H1 (cell line): ENCODE measurements at regions of chr11 and their contacts with region 1.

Region 1: GRCh38 chr11:102007567-102008437 is 39.4 kb upstream of the CFAP300 start:
- DNase-seq: no peak
- H3K4me3 ChIP-seq: no peak overlapping the region
- H3K27ac ChIP-seq: no peak overlapping the region
- H3K4me1 ChIP-seq: peaks cover 0 to 3% (median 0%) of the 10 kb centered on the region in 4 experiments; a peak in 1 of 7 replicates
- H3K27me3 ChIP-seq: no peaks in the 10 kb centered on the region
- CTCF ChIP-seq: peak in 2 of 3 experiments; percentile 23 to 29; a peak in 2 of 4 replicates
- EP300 ChIP-seq: no peak
- POLR2A ChIP-seq: no peak
- RAD21 ChIP-seq: peak in 1 of 2 experiments; percentile 56

Region 2: GRCh38 chr11:101880222-101880621 is 127.6 kb before region 1 on chr11:
- CTCF ChIA-PET with region 1: interaction called, 22 read pairs
- POLR2A ChIA-PET with region 1: no interaction called
- DNase-seq: no peak
- H3K4me3 ChIP-seq: no peak overlapping the region
- H3K27ac ChIP-seq: no peak overlapping the region
- H3K4me1 ChIP-seq: no peaks in the 10 kb centered on the region
- H3K27me3 ChIP-seq: no peaks in the 10 kb centered on the region
- CTCF ChIP-seq: peak in 2 of 3 experiments; percentile 29 to 42; a peak in 2 of 4 replicates
- EP300 ChIP-seq: no peak
- POLR2A ChIP-seq: no peak
- RAD21 ChIP-seq: peak; percentile 29 to 31; a peak in 3 of 4 replicates

Region 3: GRCh38 chr11:101996111-101996510 is 11.7 kb before region 1 on chr11:
- CTCF ChIA-PET with region 1: interaction called, 24 read pairs
- POLR2A ChIA-PET with region 1: no interaction called
- DNase-seq: no peak
- H3K4me3 ChIP-seq: no peak overlapping the region
- H3K27ac ChIP-seq: no peak overlapping the region
- H3K4me1 ChIP-seq: no peaks in the 10 kb centered on the region
- H3K27me3 ChIP-seq: no peaks in the 10 kb centered on the region
- CTCF ChIP-seq: no peak
- EP300 ChIP-seq: no peak
- POLR2A ChIP-seq: no peak
- RAD21 ChIP-seq: no peak

Region 4: DNA sequence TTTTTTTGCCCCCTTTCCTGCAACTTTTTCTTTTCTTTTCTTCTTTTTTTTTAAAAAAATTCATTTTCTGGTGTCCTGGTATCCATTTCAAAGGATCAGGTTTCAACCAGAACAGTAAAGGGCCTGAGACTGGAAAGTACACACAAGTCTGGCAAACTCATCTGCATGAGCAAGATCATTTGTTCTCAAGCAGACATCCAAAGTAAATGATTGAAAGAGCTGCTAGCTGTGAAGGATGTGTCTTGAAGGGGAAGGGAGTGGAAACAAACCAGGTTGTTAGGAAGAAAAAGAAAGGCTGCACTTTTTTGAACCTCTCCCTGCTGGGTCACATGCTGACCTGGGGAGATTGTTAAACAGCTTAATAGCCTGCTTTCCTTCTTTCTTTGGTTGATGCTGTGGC is 107.8 kb after region 1 on chr11:
- CTCF ChIA-PET with region 1: no interaction called
- POLR2A ChIA-PET with region 1: no interaction called
- DNase-seq: peak in 1 of 2 experiments; percentile 41
- H3K4me3 ChIP-seq: peak overlapping the region in 1 of 4 experiments; percentile 29; a peak in 2 of 8 replicates
- H3K27ac ChIP-seq: no peak overlapping the region
- H3K4me1 ChIP-seq: peaks cover 0 to 44% (median 5%) of the 10 kb centered on the region in 4 experiments; a peak in 5 of 7 replicates
- H3K27me3 ChIP-seq: no peaks in the 10 kb centered on the region
- CTCF ChIP-seq: no peak
- EP300 ChIP-seq: no peak
- POLR2A ChIP-seq: no peak
- RAD21 ChIP-seq: no peak

Region 5: DNA sequence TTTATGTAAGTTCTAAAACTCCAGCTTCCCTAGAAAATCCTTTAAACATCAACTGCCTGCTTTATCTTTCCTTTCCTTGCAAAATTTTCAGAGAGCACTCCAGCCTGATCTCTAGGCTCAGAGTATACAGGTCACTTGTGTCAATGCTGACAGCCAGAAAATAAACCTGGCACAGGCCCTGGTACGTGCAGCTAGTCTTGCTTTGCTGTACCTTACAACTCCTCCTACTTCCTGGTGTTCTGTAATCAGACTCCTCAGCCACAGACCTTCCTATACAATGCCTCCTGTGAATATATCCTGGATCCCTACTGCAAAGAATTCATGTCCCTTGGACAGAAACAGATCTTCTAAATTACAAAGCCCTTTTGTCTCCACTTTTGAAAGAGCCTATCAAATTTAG is 469.0 kb after region 1 on chr11:
- CTCF ChIA-PET with region 1: no interaction called
- POLR2A ChIA-PET with region 1: no interaction called
- DNase-seq: no peak
- H3K4me3 ChIP-seq: no peak overlapping the region
- H3K27ac ChIP-seq: no peak overlapping the region
- H3K4me1 ChIP-seq: peaks cover 0 to 5% (median 0%) of the 10 kb centered on the region in 4 experiments; a peak in 1 of 7 replicates
- H3K27me3 ChIP-seq: no peaks in the 10 kb centered on the region
- CTCF ChIP-seq: no peak
- EP300 ChIP-seq: no peak
- POLR2A ChIP-seq: no peak
- RAD21 ChIP-seq: no peak